Endothelial cell of umbilical vein (primary cell): ENCODE measurements at regions of chr7 and their contacts with region 1.

Region 1: DNA sequence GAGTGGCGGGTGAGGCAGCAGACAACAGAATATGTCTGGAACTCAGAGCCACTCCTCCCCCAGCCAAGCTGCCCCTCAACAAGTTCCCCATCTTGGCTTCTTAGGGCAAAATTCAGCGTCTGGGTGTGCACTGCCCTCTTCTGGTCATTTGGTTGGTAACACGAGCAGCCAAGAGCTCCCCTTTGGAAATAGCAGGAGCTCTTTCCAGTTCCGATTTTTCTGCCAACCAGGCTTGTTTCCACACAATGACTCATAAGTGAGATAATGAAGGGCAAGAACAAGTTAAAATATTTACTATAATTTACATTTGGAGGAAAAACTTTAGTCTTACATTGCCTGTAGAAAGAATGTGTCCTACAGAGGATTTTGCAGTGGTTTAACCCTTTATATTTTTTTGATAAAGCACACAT is 70.5 kb downstream of the ADCYAP1R1 start:
- DNase-seq: peak; percentile 88
- H3K4me3 ChIP-seq: no peak overlapping the region
- H3K27ac ChIP-seq: no peak overlapping the region
- H3K4me1 ChIP-seq: no peaks in the 10 kb centered on the region
- H3K27me3 ChIP-seq: peaks cover 0 to 14% of the 10 kb centered on the region in 2 experiments
- CTCF ChIP-seq: peak; percentile 81 to 85
- POLR2A ChIP-seq: no peak

Region 2: DNA sequence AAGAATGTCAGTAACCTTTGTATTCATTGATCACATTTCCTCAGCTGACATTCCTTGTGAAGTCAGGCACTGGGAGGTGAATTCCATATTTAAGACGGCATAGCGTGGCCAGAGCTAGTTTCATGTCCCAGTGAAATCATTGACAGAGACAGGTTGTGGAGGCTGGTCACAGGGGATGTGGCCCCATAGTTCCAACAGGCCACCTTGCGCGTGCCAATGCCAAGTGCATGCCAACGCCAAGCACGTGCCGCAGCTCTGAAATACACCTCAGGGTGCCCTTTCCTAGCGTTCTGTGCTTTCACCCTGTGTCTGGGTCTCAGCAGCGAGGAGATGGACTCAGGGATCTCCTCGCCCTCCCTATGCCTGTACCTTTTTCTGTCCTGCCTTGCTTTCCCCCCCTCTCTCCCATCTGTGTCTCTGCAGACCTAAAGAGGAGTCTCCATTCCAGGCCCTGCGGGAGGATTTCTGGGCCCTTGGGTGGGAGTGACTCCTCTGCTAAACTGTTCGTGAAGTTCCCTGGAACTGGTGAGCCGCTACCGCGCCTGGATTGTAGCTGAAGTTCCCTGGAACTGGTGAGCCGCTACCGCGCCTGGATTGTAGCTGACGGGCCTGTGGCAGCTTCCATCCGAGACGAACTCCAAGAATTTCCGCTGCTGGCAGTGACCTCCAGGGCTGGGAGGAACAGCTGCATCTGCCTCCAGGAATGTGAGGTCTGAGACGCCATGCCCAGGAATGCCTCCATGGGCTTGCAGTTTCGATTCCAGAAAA is 191.3 kb before region 1 on chr7:
- CTCF ChIA-PET with region 1: interaction called, 15 read pairs
- POLR2A ChIA-PET with region 1: no interaction called
- dilution Hi-C with region 1: no loop called
- intact Hi-C with region 1: no loop called
- DNase-seq: no peak
- H3K4me3 ChIP-seq: no peak overlapping the region
- H3K27ac ChIP-seq: no peak overlapping the region
- H3K4me1 ChIP-seq: no peaks in the 10 kb centered on the region
- H3K27me3 ChIP-seq: peaks cover 0 to 1% of the 10 kb centered on the region in 2 experiments
- CTCF ChIP-seq: no peak
- POLR2A ChIP-seq: no peak

Region 3: DNA sequence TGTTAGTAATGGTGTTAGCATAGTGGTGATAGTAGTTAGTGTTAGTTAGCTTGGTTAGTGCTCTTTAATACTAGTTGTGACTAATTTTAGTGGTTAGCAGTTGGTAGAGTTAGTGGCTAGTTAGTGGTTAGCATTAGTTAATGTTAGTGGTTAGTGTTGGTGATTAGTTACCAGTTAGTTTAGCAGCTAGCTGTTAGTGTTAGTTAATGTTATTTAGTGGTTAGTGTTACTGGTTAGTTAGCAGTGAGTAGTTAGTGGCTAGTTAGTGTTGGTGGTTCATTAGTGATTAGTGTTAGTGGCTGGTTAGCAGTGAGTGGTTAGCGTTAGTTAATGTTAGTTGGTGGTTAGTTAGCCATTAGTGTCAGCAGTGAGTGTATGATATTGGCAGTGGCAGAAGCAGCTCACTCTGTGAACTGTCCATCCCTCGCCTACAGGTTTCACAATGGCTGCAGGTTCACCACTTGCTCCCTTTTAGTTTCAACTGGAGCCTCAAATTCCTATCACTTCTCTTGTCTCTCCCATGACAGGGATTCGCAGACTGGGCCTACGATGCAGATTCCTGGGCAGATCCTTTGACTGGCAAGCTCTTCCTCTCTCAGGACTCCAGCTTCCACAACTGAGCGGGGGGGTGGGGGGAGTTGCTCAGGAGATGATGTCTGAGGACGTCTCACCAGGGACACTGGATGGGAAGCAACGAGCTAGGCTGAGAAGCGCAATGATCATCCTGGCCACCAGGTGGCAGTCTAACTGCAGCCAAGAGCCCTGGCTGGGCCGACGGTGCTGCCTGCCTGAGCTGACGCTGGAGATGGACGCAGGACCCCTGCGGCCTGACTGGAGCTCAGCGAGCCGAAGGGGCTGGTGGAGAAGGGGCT is 139.4 kb before region 1 on chr7:
- CTCF ChIA-PET with region 1: interaction called, 1,079 read pairs
- POLR2A ChIA-PET with region 1: interaction called, 11 read pairs
- dilution Hi-C with region 1: no loop called
- intact Hi-C with region 1: loop called (anchors 1 kb)
- DNase-seq: peak; percentile 75
- H3K4me3 ChIP-seq: no peak overlapping the region
- H3K27ac ChIP-seq: no peak overlapping the region
- H3K4me1 ChIP-seq: peaks cover 26% of the 10 kb centered on the region
- H3K27me3 ChIP-seq: peaks cover 4 to 5% of the 10 kb centered on the region in 2 experiments
- CTCF ChIP-seq: peak; percentile 80 to 99
- POLR2A ChIP-seq: no peak

Region 4: GRCh38 chr7:31052841-31053601 is 69.6 kb before region 1 on chr7:
- CTCF ChIA-PET with region 1: interaction called, 14 read pairs
- POLR2A ChIA-PET with region 1: no interaction called
- dilution Hi-C with region 1: no loop called
- intact Hi-C with region 1: no loop called
- DNase-seq: no peak
- H3K4me3 ChIP-seq: no peak overlapping the region
- H3K27ac ChIP-seq: no peak overlapping the region
- H3K4me1 ChIP-seq: no peaks in the 10 kb centered on the region
- H3K27me3 ChIP-seq: peaks cover 32 to 44% of the 10 kb centered on the region in 2 experiments
- CTCF ChIP-seq: no peak
- POLR2A ChIP-seq: no peak

Region 5: DNA sequence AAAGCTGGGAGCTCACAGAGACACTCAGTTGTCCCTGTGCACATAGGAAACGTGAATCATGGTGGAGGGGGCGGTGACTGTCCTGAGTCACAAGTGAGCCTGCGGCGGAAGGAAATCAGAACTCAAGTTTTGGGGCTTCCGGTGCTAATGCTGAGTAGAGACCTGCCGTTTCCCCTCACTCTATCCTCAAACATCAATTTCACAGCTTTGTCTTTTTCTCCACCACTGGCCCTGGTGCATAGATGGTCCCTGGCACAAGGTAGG is 48.6 kb before region 1 on chr7:
- CTCF ChIA-PET with region 1: interaction called, 11 read pairs
- POLR2A ChIA-PET with region 1: no interaction called
- dilution Hi-C with region 1: no loop called
- intact Hi-C with region 1: no loop called
- DNase-seq: peak; percentile 6
- H3K4me3 ChIP-seq: no peak overlapping the region
- H3K27ac ChIP-seq: no peak overlapping the region
- H3K4me1 ChIP-seq: peaks cover 12% of the 10 kb centered on the region
- H3K27me3 ChIP-seq: no peaks in the 10 kb centered on the region
- CTCF ChIP-seq: no peak
- POLR2A ChIP-seq: no peak

Region 6: GRCh38 chr7:31104361-31105255 is 18.0 kb before region 1 on chr7:
- CTCF ChIA-PET with region 1: interaction called, 28 read pairs
- POLR2A ChIA-PET with region 1: no interaction called
- dilution Hi-C with region 1: no loop called
- intact Hi-C with region 1: no loop called
- DNase-seq: no peak
- H3K4me3 ChIP-seq: no peak overlapping the region
- H3K27ac ChIP-seq: no peak overlapping the region
- H3K4me1 ChIP-seq: no peaks in the 10 kb centered on the region
- H3K27me3 ChIP-seq: no peaks in the 10 kb centered on the region
- CTCF ChIP-seq: no peak
- POLR2A ChIP-seq: no peak